Panc1 (cell line): ENCODE measurements at regions of chr3 and their contacts with region 1.

Region 1: GRCh38 chr3:158050461-158050860 is 55.8 kb downstream of the SHOX2 start:
- DNase-seq: no peak
- ATAC-seq: no peak
- H3K4me3 ChIP-seq: no peak overlapping the region
- H3K27ac ChIP-seq: no peak overlapping the region
- H3K4me1 ChIP-seq: no peaks in the 10 kb centered on the region
- H3K27me3 ChIP-seq: no peaks in the 10 kb centered on the region
- CTCF ChIP-seq: no peak

Region 2: DNA sequence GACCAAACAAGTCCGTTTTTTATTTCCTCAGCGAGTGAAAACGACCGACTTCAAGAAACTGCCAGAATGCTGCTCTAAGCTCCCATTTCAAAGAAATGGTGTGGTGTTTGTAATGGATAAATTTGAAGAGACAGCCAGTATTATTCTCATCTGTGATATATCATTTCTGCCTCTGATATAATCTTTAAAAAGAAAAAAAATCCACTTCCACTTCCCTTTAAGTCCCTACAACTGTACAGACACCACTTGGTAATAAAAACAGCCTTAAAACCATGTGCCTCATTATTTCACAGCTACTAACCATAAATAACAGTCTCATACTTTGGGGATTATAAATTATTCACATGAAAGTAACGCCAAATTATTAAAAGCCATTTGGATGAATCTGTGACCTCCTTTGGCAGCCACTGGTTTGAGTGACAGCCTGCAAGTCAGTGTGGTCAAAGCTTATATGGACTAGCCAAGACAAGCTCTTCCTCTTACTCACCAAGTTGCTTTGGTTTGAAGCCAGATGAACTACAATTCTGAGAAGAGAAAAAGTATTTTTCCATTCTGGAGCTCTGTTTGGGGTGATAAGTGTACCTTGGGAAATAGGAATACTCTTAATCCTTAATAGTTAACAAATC is 112.2 kb before region 1 on chr3:
- CTCF ChIA-PET with region 1: no interaction called
- POLR2A ChIA-PET with region 1: no interaction called
- in situ Hi-C with region 1: no loop called
- intact Hi-C with region 1: no loop called
- DNase-seq: no peak
- ATAC-seq: no peak
- H3K4me3 ChIP-seq: no peak overlapping the region
- H3K27ac ChIP-seq: no peak overlapping the region
- H3K4me1 ChIP-seq: no peaks in the 10 kb centered on the region
- H3K27me3 ChIP-seq: peaks cover 3% of the 10 kb centered on the region; the same call in 1 of the 2 replicates
- CTCF ChIP-seq: no peak

Region 3: GRCh38 chr3:158018462-158018861 is 32.0 kb before region 1 on chr3:
- CTCF ChIA-PET with region 1: no interaction called
- POLR2A ChIA-PET with region 1: no interaction called
- in situ Hi-C with region 1: no loop called
- intact Hi-C with region 1: no loop called
- DNase-seq: no peak
- ATAC-seq: no peak
- H3K4me3 ChIP-seq: no peak overlapping the region
- H3K27ac ChIP-seq: no peak overlapping the region
- H3K4me1 ChIP-seq: no peaks in the 10 kb centered on the region
- H3K27me3 ChIP-seq: no peaks in the 10 kb centered on the region
- CTCF ChIP-seq: no peak

Region 4: DNA sequence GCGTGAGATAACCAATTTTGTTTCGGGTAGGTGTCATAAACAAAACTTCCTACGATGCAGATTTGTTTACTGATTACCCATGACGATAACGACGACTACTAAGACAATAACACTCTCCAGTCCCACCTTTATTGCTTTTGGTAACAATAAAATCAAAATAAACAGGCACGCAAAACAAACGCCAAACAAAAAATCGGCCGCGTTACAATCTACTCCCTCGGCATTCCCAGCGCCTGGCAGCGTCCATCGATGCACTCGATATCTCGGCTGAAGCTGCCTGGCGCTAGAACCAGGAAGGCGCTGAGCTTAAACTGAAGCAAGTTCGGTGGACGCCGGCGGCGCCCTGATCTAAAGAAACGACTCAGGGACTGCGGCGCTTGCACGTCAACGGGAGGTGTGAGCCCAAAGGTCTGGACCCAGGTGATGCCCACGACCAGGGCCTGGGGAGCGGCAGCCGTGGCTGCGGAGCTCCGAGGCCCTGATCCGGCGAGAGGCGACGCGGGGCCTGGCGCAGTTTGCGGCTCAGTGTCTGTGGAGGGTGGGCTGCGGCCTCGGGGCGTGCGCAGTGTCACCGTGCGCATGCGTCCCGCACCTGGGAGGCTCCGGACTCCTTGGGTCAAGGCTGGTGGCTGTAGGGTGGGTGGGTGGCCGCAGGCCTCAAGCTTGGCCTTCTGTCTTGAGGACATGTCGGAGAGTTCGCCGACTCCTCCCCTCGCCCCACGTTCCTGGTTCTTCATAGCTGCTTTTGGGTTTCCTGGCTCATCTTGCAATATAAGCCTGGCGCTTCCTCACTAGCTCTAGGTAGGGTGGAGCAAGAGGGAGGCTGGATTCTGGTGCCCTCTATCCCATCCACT is 59.6 kb after region 1 on chr3 and contains the start of gene RSRC1:
- CTCF ChIA-PET with region 1: no interaction called
- POLR2A ChIA-PET with region 1: no interaction called
- in situ Hi-C with region 1: no loop called
- intact Hi-C with region 1: no loop called
- DNase-seq: peak; percentile 84
- ATAC-seq: peak; percentile 89
- H3K4me3 ChIP-seq: peak within 1 kb of the TSS; percentile 77 to 92
- H3K27ac ChIP-seq: peak within 1 kb of the TSS; percentile 96
- H3K4me1 ChIP-seq: peaks cover 23% of the 10 kb centered on the region
- H3K27me3 ChIP-seq: no peaks in the 10 kb centered on the region
- CTCF ChIP-seq: no peak
- total RNA-seq, gene RSRC1: 49.4 TPM

Region 5: GRCh38 chr3:158590223-158590622 is 539.8 kb after region 1 on chr3:
- CTCF ChIA-PET with region 1: no interaction called
- POLR2A ChIA-PET with region 1: interaction called, 25 read pairs
- in situ Hi-C with region 1: no loop called
- intact Hi-C with region 1: no loop called
- DNase-seq: no peak
- ATAC-seq: no peak
- H3K4me3 ChIP-seq: no peak overlapping the region
- H3K27ac ChIP-seq: no peak overlapping the region
- H3K4me1 ChIP-seq: no peaks in the 10 kb centered on the region
- H3K27me3 ChIP-seq: no peaks in the 10 kb centered on the region
- CTCF ChIP-seq: no peak